MCF 10A (cell line): ENCODE measurements at regions of chr7 and their contacts with region 1.

Region 1: DNA sequence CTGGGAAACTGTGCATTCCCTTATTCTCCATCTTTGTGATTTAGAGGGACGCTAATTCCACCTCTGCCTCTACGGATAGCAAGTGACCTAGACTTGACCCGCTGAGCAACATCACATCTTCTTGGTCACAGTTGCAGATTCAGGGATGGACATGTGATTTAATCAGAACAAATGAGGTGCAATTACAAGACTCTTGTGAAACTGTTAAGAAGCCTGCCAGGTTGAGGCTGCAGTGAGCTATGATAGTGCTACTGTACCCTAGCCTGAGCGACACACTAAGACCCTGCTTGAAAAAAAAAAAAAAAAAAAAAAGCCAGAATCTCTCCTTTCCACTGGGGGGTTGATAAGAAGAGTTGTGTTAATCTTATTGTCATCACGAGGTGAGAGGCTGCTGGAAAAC is 14.4 kb downstream of the MPLKIP start:
- DNase-seq: no peak
- H3K4me3 Mint-ChIP-seq: no peak overlapping the region
- H3K27ac Mint-ChIP-seq: no peak overlapping the region
- H3K4me1 Mint-ChIP-seq: peaks cover 6% of the 10 kb centered on the region
- H3K27me3 Mint-ChIP-seq: no peaks in the 10 kb centered on the region
- CTCF ChIP-seq: no peak

Region 2: DNA sequence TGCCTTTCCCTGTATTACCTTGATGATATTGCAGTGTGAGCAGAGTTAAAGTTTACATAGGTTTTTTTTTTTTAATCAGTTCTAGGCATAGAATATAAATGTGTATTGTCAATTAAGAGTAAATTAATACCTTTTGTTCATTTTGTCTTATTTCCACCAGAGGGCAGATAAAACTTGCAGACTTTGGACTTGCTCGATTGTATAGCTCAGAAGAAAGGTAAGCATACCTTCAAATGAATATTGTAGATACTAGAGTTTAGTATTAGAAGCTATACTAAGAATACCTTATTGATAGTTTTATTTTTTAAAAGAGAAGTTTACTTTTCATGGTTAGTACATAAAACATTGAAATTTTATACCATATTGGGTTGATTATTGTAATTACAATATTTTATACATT is 72.4 kb before region 1 on chr7:
- CTCF ChIA-PET with region 1: no interaction called
- POLR2A ChIA-PET with region 1: no interaction called
- intact Hi-C with region 1: no loop called
- DNase-seq: peak; percentile 8
- H3K4me3 Mint-ChIP-seq: no peak overlapping the region
- H3K27ac Mint-ChIP-seq: no peak overlapping the region
- H3K4me1 Mint-ChIP-seq: no peaks in the 10 kb centered on the region
- H3K27me3 Mint-ChIP-seq: no peaks in the 10 kb centered on the region
- CTCF ChIP-seq: no peak

Region 3: DNA sequence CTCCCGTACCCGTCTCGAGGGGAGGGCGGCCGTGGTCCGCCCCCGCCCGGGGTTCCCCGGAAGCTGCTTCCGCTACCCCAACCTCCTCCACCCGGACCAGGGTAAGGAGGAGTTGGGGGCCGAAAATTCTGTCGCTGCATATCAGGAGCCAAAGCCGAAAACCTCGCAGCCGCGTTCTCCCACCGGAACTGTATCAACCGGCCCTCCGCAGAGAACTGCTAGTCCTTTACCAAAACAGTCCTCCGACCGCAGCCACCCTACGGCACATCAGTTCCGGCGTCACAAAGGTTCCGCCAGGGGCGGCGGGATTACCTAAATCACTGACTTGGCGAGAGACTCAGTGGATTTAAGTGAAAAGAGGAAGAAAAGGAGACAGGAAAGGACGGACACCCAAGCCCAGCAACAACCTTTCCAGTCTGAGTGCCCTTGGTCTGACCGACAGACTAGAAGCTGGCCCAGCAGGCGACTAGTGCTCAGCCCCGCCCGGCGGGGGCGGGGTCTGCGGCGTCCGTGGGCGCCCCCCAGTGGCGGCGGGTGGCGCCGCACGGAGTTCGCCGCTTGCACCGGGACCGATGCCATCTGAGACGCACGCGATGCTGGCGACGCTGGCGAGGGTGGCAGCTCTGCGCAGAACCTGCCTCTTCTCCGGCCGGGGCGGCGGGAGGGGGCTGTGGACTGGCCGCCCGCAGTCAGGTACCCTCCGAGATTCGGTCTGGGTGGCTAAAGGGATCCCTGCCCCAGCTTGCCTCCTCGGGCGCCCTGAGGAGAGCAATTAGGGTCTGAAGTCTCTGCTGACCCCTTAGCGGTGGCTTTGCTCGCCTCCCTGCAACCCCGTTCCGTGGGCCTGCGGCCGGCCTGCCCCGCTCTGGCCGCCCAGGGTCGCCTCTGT is 14.7 kb after region 1 on chr7 and contains the starts of genes MPLKIP and SUGCT:
- CTCF ChIA-PET with region 1: interaction called, 5 read pairs
- POLR2A ChIA-PET with region 1: interaction called, 26 read pairs
- intact Hi-C with region 1: no loop called
- DNase-seq: peak; percentile 86
- H3K4me3 Mint-ChIP-seq: peak within 1 kb of the TSS; percentile 84
- H3K27ac Mint-ChIP-seq: peak within 1 kb of the TSS; percentile 93
- H3K4me1 Mint-ChIP-seq: peaks cover 12% of the 10 kb centered on the region
- H3K27me3 Mint-ChIP-seq: no peaks in the 10 kb centered on the region
- CTCF ChIP-seq: peak; percentile 98
- total RNA-seq, gene MPLKIP: 30.6 and 31.3 TPM in 2 replicates
- total RNA-seq, gene SUGCT: 20.2 and 25.4 TPM in 2 replicates